CD8-positive, alpha-beta T cell (primary cell): ENCODE measurements at regions of chr10 and their contacts with region 1.

Region 1: GRCh38 chr10:8473205-8473604 is 418.7 kb downstream of the GATA3 start:
- DNase-seq: peak in 3 of 9 experiments; percentile 15 to 69 (median 58)
- ATAC-seq: peak; percentile 34
- H3K4me3 ChIP-seq: no peak overlapping the region
- H3K4me3 Mint-ChIP-seq: no peak overlapping the region
- H3K27ac ChIP-seq: no peak overlapping the region
- H3K27ac Mint-ChIP-seq: no peak overlapping the region
- H3K4me1 ChIP-seq: no peaks in the 10 kb centered on the region
- H3K4me1 Mint-ChIP-seq: no peaks in the 10 kb centered on the region
- H3K27me3 ChIP-seq: no peaks in the 10 kb centered on the region
- H3K27me3 Mint-ChIP-seq: peaks cover 16% of the 10 kb centered on the region
- CTCF ChIP-seq: peak; percentile 16

Region 2: DNA sequence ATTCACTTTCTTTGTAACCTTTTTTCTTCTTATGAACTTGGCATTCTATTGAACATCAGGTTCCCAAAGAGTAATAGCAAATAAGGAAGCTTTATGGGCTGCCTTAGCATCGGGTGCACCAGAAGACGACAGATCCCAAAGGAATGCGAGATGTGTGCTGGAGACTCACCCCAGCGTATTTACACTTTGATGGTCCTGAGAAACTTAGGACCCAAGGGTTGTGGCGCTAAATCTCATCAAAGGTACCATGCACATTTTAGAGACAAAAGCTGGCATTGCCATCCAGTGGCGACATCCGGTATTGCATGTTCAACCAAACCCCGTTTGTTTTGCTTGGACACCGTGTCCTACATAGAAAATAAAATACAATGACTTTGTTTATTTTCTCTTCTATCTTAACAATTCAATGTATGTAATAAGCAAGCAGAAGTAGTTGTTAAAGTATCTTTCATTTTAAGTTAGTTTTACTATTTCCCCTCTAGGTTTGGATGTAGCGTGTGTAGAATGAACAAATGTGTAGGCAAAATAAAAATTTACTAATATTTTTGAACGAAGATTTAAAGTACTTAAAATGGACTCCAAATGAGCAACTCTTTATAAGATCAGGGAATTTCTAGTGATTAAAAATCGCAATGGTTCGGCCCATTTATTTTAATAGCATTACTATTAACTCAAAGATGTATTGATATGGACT is 736.0 kb after region 1 on chr10:
- CTCF ChIA-PET with region 1: interaction called, 6 read pairs
- POLR2A ChIA-PET with region 1: no interaction called
- intact Hi-C with region 1: loop called in 1 of 2 experiments (anchors 10 kb)
- DNase-seq: peak; percentile 51 to 84 (median 69)
- ATAC-seq: peak; percentile 64
- H3K4me3 ChIP-seq: no peak overlapping the region
- H3K4me3 Mint-ChIP-seq: no peak overlapping the region
- H3K27ac ChIP-seq: no peak overlapping the region
- H3K27ac Mint-ChIP-seq: no peak overlapping the region
- H3K4me1 ChIP-seq: peaks cover 6% of the 10 kb centered on the region
- H3K4me1 Mint-ChIP-seq: peaks cover 5% of the 10 kb centered on the region
- H3K27me3 ChIP-seq: no peaks in the 10 kb centered on the region
- H3K27me3 Mint-ChIP-seq: peaks cover 6% of the 10 kb centered on the region
- CTCF ChIP-seq: peak; percentile 96